Esophagus muscularis mucosa (tissue), 4 donors: ENCODE measurements at regions of chr10 and their contacts with region 1.

Region 1: DNA sequence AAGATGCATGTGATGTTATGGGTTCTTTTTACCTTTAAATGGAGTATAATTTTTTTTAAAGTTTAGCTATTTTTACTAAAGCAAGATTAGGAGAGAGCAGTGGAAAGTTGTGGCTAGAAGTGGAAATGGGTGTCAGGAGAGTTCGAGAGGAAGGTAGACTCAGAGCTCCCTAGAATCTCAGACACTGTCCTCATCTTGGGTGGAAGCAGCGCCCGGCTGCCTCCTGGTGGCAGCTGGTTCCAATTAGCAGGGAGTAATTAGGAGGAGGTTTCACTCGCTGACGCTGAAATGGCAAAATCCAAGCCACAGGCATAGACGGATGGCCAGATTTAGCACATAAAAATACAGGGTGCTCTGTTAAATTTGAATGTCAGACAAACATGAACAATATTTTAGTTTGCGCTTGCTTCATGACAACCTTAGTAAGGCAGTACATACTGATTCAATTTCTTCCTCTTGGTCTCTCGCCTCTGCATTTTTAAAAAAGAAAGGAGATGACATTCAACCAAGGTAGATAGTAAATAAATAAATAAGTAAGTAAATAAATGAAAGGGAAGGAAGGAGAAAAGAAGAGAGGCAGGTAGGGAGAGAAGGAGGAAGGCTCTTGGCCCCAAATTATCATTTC is 58.5 kb downstream of the LGI1 start:
- DNase-seq: no peak
- H3K4me3 ChIP-seq: no peak overlapping the region
- H3K27ac ChIP-seq: no peak overlapping the region
- H3K4me1 ChIP-seq: peaks cover 0 to 11% (median 4%) of the 10 kb centered on the region in 4 donors
- H3K27me3 ChIP-seq: peaks cover 0 to 3% (median 0%) of the 10 kb centered on the region in 4 donors
- CTCF ChIP-seq: peak; percentile 34 to 72 (median 58)
- EP300 ChIP-seq: no peak
- POLR2A ChIP-seq: no peak

Region 2: DNA sequence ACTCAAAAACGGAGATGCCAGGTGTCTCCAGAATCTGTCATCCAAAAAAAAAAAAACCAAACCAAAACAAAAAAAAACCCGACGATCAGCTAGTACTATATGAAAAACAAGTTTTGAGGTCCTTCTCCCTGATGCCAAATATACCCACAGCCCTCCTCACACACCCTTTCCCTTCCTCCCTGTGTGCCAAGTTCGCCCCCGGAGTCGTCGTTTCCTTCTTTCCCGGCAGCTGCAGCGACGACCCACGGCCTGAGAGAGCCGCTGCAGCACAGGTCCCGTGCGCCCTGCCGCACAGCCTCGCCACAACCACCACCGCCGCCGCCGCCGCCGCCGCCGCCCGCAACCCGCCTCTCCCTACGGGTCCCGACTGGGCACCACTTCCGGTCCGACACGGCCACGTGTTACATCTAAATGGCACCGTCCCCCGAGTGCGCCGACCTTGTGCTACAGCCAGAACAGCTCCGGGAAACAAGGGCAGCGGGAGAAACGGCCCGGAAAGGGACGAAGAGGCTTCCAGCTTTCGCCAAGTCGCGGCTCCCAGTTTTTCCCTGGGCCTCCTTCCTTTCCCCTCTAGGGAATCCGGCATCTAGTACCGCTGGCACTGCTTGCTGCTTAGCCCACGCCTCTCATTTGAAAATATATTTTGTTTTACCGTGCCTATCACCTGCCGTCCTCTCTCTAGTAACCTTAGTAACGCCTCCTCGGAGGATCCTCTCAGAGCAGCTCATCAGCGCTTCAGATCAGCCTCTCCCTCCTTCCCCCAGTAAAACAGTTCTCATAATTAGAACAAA is 113.8 kb before region 1 on chr10 and contains the start of gene FRA10AC1:
- intact Hi-C with region 1: loop called (anchors 2 kb)
- DNase-seq: peak; percentile 99
- H3K4me3 ChIP-seq: peak within 1 kb of the TSS; percentile 63 to 84 (median 78)
- H3K27ac ChIP-seq: peak within 1 kb of the TSS; percentile 87 to 92 (median 88)
- H3K4me1 ChIP-seq: peaks cover 9 to 29% (median 23%) of the 10 kb centered on the region in 4 donors
- H3K27me3 ChIP-seq: no peaks in the 10 kb centered on the region
- CTCF ChIP-seq: peak; percentile 48 to 71 (median 62)
- EP300 ChIP-seq: no peak
- POLR2A ChIP-seq: peak; percentile 59
- total RNA-seq, gene FRA10AC1: 7.0 to 22.4 (median 12.1) TPM